ENCODE measurements at regions of chr17 and their contacts with region 1.

Region 1: GRCh38 chr17:78665952-78666920 is 89.0 kb upstream of the DNAH17 start:
- DNase-seq: peak; percentile 95 to 99 (median 97)
- H3K4me3 ChIP-seq: peak overlapping the region in 3 of 7 experiments; percentile 0 to 61 (median 34)
- H3K27ac ChIP-seq: peak overlapping the region in 1 of 2 experiments; percentile 50
- H3K4me1 ChIP-seq: peaks cover 11 to 33% (median 30%) of the 10 kb centered on the region in 4 experiments
- H3K27me3 ChIP-seq: no peaks in the 10 kb centered on the region

Region 2: GRCh38 chr17:78592991-78593329 is 73.3 kb before region 1 on chr17:
- CTCF ChIA-PET with region 1: no interaction called
- POLR2A ChIA-PET with region 1: interaction called, 10 read pairs
- DNase-seq: no peak
- H3K4me3 ChIP-seq: peak overlapping the region in 1 of 7 experiments; percentile 8
- H3K27ac ChIP-seq: no peak overlapping the region
- H3K4me1 ChIP-seq: peaks cover 5 to 23% (median 17%) of the 10 kb centered on the region in 4 experiments
- H3K27me3 ChIP-seq: peaks cover 0 to 5% (median 0%) of the 10 kb centered on the region in 5 experiments

Region 3: GRCh38 chr17:78628547-78629435 is 37.4 kb before region 1 on chr17:
- CTCF ChIA-PET with region 1: no interaction called
- POLR2A ChIA-PET with region 1: no interaction called
- DNase-seq: peak in 1 of 3 donors; percentile 4
- H3K4me3 ChIP-seq: no peak overlapping the region
- H3K27ac ChIP-seq: no peak overlapping the region
- H3K4me1 ChIP-seq: peaks cover 0 to 8% (median 1%) of the 10 kb centered on the region in 4 experiments
- H3K27me3 ChIP-seq: no peaks in the 10 kb centered on the region

Region 4: GRCh38 chr17:78781104-78781947 is 115.1 kb after region 1 on chr17:
- CTCF ChIA-PET with region 1: no interaction called
- POLR2A ChIA-PET with region 1: no interaction called
- DNase-seq: peak; percentile 40 to 64 (median 60)
- H3K4me3 ChIP-seq: peak overlapping the region; percentile 57 to 90 (median 81)
- H3K27ac ChIP-seq: peak overlapping the region; percentile 52 to 81
- H3K4me1 ChIP-seq: peaks cover 17 to 38% (median 32%) of the 10 kb centered on the region in 4 experiments
- H3K27me3 ChIP-seq: no peaks in the 10 kb centered on the region

Measured in common myeloid progenitor, CD34-positive (primary cell).